ENCODE measurements at regions of chr16 and their contacts with region 1.

Region 1: DNA sequence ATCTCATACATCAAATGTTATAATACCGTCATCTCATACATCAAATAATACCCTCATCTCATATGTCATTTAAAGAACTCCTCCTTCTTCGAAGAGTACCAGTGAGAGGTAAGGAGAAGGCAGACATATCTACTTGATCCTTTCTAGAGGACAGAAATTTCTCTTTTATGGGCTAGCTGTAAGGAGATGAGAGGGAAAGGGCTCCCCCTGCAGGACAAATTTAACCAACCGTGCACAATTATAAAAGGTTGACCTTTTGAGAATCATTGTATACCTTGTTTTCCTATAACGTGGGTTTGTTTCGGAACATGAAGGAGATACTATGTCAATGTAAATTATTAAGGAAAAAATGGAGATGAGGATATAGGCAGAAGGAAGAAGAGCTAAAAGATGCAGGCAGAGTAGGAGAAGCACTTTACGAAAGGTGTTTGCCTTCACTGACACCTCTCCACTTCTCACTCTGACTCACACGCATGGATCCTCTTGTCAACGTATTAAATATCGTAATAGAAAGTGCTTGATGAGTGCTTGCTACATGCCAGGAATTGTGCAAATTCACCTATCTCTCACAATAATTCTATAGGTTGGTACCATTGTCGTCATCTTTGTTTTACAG is 465.9 kb upstream of the ERCC4 start:
- DNase-seq: peak; percentile 72
- H3K4me3 ChIP-seq: no peak overlapping the region
- H3K27ac ChIP-seq: no peak overlapping the region
- H3K4me1 ChIP-seq: peaks cover 14% of the 10 kb centered on the region
- CTCF ChIP-seq: peak; percentile 96

Region 2: GRCh38 chr16:12896562-12896961 is 557.5 kb before region 1 on chr16:
- CTCF ChIA-PET with region 1: no interaction called
- POLR2A ChIA-PET with region 1: no interaction called
- intact Hi-C with region 1: loop called (anchors 2 kb)
- DNase-seq: peak; percentile 69
- H3K4me3 ChIP-seq: no peak overlapping the region
- H3K27ac ChIP-seq: no peak overlapping the region
- H3K4me1 ChIP-seq: no peaks in the 10 kb centered on the region
- CTCF ChIP-seq: peak; percentile 89

Region 3: GRCh38 chr16:13206606-13207005 is 247.4 kb before region 1 on chr16:
- CTCF ChIA-PET with region 1: no interaction called
- POLR2A ChIA-PET with region 1: no interaction called
- intact Hi-C with region 1: loop called (anchors 10 kb)
- DNase-seq: no peak
- H3K4me3 ChIP-seq: no peak overlapping the region
- H3K27ac ChIP-seq: no peak overlapping the region
- H3K4me1 ChIP-seq: no peaks in the 10 kb centered on the region
- CTCF ChIP-seq: no peak

Region 4: DNA sequence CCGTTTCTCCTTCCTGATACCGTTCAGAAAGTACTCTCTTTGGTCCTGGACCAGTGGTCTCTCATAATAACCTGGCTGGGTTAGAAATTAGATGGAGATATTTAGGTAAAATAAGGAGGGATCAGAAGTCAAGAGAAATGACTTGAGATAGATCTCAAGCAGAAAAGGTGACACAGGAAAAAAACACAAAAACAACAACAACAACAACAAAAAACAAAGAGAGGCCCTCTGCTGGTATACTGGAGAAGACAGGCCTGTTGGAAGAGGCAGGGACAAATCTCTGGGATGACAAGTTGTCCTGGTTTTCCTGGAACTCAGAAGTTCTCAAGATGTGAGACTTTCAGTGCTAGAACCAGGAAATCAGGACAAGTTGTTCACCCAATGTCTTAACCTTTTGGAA is 122.1 kb before region 1 on chr16:
- CTCF ChIA-PET with region 1: no interaction called
- POLR2A ChIA-PET with region 1: no interaction called
- intact Hi-C with region 1: loop called (anchors 10 kb)
- DNase-seq: no peak
- H3K4me3 ChIP-seq: no peak overlapping the region
- H3K27ac ChIP-seq: no peak overlapping the region
- H3K4me1 ChIP-seq: no peaks in the 10 kb centered on the region
- CTCF ChIP-seq: 0 out of 2 replicates have a peak, but pooled peaks have one; percentile 42